T-cell (primary cell): ENCODE measurements at regions of chr4 and their contacts with region 1.

Region 1: DNA sequence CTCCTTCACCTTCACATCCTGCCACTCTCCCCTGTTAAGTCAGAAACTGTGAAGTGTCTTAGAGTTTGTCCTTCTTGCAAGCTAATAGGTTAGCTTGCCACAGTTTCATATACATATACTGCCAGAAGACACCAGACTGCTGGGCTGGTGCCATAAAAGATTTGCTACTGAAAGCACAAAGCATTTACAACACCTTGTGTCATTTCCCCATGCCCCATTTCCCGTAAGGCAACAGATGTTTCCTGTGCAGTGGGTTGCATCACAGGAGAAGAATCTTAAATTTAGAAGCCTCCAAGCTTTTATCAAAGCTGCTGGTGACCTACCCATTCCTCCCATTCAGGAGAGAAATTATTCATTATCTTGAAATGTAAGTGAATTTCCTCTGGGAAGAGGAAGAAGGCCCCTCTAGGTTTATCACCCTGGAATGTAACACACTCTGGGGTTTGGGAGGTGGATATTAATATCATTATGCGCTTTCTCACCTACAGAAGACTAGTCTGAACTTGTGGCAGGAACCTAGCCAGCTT is 34.5 kb upstream of the RAB33B start:
- DNase-seq: peak in 11 of 35 experiments; percentile 2 to 32 (median 5)
- ATAC-seq: peak in 2 of 4 experiments; percentile 16 to 58
- H3K4me3 ChIP-seq: no peak overlapping the region
- H3K4me3 Mint-ChIP-seq: no peak overlapping the region
- H3K27ac ChIP-seq: no peak overlapping the region
- H3K27ac Mint-ChIP-seq: peak overlapping the region; percentile 28 to 68
- H3K4me1 ChIP-seq: no peaks in the 10 kb centered on the region
- H3K4me1 Mint-ChIP-seq: peaks cover 12 to 19% (median 16%) of the 10 kb centered on the region in 3 donors
- H3K27me3 ChIP-seq: no peaks in the 10 kb centered on the region
- H3K27me3 Mint-ChIP-seq: no peaks in the 10 kb centered on the region

Region 2: DNA sequence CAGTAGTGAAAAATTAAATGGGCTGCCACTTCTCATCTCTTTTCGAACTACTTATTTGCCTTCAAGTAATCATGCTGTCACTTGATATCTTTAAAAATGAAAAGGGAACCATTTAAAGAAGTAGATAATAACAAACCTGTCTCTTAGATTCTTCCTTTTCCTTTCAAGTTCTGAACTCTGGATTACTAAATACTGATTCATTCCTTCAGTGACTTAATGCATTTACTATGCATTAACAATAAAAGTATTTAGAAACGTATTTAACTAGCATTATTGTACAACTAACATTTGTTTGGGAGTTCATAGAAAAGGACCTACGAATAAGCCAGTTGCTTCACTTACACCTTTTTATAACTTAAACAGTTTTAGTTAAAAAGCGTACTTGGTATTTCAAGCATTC is 26.7 kb before region 1 on chr4:
- CTCF ChIA-PET with region 1: no interaction called
- POLR2A ChIA-PET with region 1: no interaction called
- DNase-seq: no peak
- ATAC-seq: no peak
- H3K4me3 ChIP-seq: no peak overlapping the region
- H3K4me3 Mint-ChIP-seq: no peak overlapping the region
- H3K27ac ChIP-seq: no peak overlapping the region
- H3K27ac Mint-ChIP-seq: no peak overlapping the region
- H3K4me1 ChIP-seq: no peaks in the 10 kb centered on the region
- H3K4me1 Mint-ChIP-seq: peaks cover 0 to 6% (median 5%) of the 10 kb centered on the region in 3 donors
- H3K27me3 ChIP-seq: no peaks in the 10 kb centered on the region
- H3K27me3 Mint-ChIP-seq: no peaks in the 10 kb centered on the region

Region 3: GRCh38 chr4:139436122-139436521 is 16.7 kb after region 1 on chr4:
- CTCF ChIA-PET with region 1: interaction called in 1 of 2 experiments, 10 read pairs
- POLR2A ChIA-PET with region 1: no interaction called
- DNase-seq: no peak
- ATAC-seq: no peak
- H3K4me3 ChIP-seq: no peak overlapping the region
- H3K4me3 Mint-ChIP-seq: no peak overlapping the region
- H3K27ac ChIP-seq: no peak overlapping the region
- H3K27ac Mint-ChIP-seq: no peak overlapping the region
- H3K4me1 ChIP-seq: no peaks in the 10 kb centered on the region
- H3K4me1 Mint-ChIP-seq: peaks cover 0 to 9% (median 5%) of the 10 kb centered on the region in 3 donors
- H3K27me3 ChIP-seq: no peaks in the 10 kb centered on the region
- H3K27me3 Mint-ChIP-seq: no peaks in the 10 kb centered on the region